ENCODE measurements at regions of chr3 and their contacts with region 1.

Region 1: GRCh38 chr3:141360888-141361598 is 7.3 kb upstream of the ZBTB38 start:
- DNase-seq: no peak
- H3K4me3 ChIP-seq: peak overlapping the region; percentile 17 to 27
- H3K27ac ChIP-seq: peak overlapping the region; percentile 71
- H3K4me1 ChIP-seq: peaks cover 14% of the 10 kb centered on the region
- H3K27me3 ChIP-seq: no peaks in the 10 kb centered on the region
- CTCF ChIP-seq: peak; percentile 61 to 78 (median 62)
- POLR2A ChIP-seq: no peak

Region 2: GRCh38 chr3:141303481-141304223 is 57.4 kb before region 1 on chr3:
- intact Hi-C with region 1: loop called (anchors 10 kb)
- DNase-seq: no peak
- H3K4me3 ChIP-seq: no peak overlapping the region
- H3K27ac ChIP-seq: no peak overlapping the region
- H3K4me1 ChIP-seq: no peaks in the 10 kb centered on the region
- H3K27me3 ChIP-seq: no peaks in the 10 kb centered on the region
- CTCF ChIP-seq: peak; percentile 70 to 80 (median 78)
- POLR2A ChIP-seq: no peak

Region 3: GRCh38 chr3:141412087-141412935 is 51.3 kb after region 1 on chr3:
- intact Hi-C with region 1: loop called (anchors 10 kb)
- DNase-seq: no peak
- H3K4me3 ChIP-seq: peak overlapping the region; percentile 38 to 39
- H3K27ac ChIP-seq: peak overlapping the region; percentile 98
- H3K4me1 ChIP-seq: peaks cover 92% of the 10 kb centered on the region
- H3K27me3 ChIP-seq: no peaks in the 10 kb centered on the region
- CTCF ChIP-seq: no peak
- POLR2A ChIP-seq: peak in 1 of 2 donors; percentile 20

Region 4: GRCh38 chr3:141561426-141562034 is 200.5 kb after region 1 on chr3:
- intact Hi-C with region 1: no loop called
- DNase-seq: no peak
- H3K4me3 ChIP-seq: no peak overlapping the region
- H3K27ac ChIP-seq: no peak overlapping the region
- H3K4me1 ChIP-seq: peaks cover 23% of the 10 kb centered on the region
- H3K27me3 ChIP-seq: no peaks in the 10 kb centered on the region
- CTCF ChIP-seq: peak; percentile 91 to 99 (median 92)
- POLR2A ChIP-seq: no peak

Measured in vagina (tissue), 2 donors.